Mucosa of descending colon (tissue), 3 donors: ENCODE measurements at regions of chr7 and their contacts with region 1.

Region 1: GRCh38 chr7:29102548-29103151 is 43.7 kb downstream of the CPVL start:
- DNase-seq: peak in 2 of 3 donors; percentile 69 to 77
- ATAC-seq: peak; percentile 59
- H3K4me3 ChIP-seq: no peak overlapping the region
- H3K4me1 ChIP-seq: no peaks in the 10 kb centered on the region
- CTCF ChIP-seq: peak; percentile 35

Region 2: DNA sequence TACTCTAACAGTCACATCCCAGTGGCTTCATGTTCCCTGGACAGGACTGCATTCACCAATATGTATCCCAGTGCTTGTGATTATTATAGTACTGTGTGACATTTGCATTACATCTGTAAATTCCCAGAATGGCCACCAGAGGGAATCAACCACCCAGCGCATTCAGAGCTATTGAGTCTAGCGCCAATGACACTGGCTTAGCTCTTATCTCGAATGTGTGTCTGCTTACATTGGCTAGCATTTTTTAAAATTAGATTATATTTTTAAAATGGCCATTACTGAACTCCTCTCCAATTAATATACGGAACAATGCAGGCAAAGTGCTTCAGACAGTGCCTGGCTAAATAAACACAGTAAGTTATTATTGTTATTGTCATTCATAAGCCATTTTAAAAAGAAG is 180.8 kb before region 1 on chr7:
- intact Hi-C with region 1: loop called (anchors 2 to 5 kb)
- DNase-seq: peak in 1 of 3 donors; percentile 76
- ATAC-seq: peak; percentile 95
- H3K4me3 ChIP-seq: no peak overlapping the region
- H3K4me1 ChIP-seq: no peaks in the 10 kb centered on the region
- CTCF ChIP-seq: peak; percentile 54

Region 3: GRCh38 chr7:28926871-28927597 is 175.6 kb before region 1 on chr7:
- intact Hi-C with region 1: loop called (anchors 2 to 5 kb)
- DNase-seq: peak; percentile 64 to 85 (median 71)
- ATAC-seq: peak; percentile 94
- H3K4me3 ChIP-seq: no peak overlapping the region
- H3K4me1 ChIP-seq: no peaks in the 10 kb centered on the region
- CTCF ChIP-seq: peak; percentile 59